Mammary epithelial cell (primary cell): ENCODE measurements at regions of chr15 and their contacts with region 1.

Region 1: GRCh38 chr15:38129531-38130204 is 123.0 kb upstream of the SPRED1 start:
- DNase-seq: peak; percentile 93
- H3K4me3 ChIP-seq: peak overlapping the region; percentile 26 to 34 (median 34)
- H3K27ac ChIP-seq: peak overlapping the region; percentile 79
- H3K4me1 ChIP-seq: peaks cover 50% of the 10 kb centered on the region
- H3K27me3 ChIP-seq: no peaks in the 10 kb centered on the region
- CTCF ChIP-seq: no peak

Region 2: DNA sequence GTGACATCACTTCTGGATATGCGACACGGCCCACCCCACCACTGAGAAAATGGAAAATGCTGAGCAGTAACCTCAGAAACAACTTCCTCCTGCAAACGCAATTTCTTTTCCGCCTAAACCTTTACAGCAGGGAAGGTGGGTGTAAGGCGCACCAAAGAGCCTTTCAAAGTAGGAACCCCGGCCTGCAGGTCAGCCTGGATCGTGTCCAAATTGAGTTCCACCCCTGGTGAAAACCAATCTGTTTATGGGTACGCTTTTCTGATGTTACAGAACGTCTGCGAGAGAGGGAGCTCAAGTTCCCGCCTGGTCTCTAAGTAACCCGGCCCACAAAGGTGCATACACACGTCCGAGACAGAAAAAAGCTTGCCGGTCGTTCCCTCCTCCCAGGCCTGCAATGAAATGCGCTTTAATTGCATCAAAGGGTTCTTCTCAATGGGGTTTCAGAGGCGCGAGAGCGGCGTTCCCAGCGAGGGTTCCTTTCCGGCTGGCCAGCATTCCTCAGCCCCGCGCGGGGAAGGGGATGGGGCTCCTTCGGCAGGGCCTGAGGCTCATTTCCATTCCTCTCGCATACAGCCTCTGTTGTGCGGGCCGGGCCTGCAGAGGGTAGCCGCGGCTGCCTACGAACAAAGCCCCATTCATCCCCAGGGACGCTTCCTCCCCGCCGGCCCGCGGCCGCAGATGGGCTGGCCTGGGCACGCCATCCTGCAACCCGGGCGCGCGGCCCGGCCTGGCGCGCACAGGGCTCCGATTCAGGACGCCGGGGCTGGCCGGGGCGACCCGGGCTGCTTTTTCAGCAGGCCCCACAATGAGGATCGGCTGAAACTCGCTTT is 57.1 kb before region 1 on chr15:
- CTCF ChIA-PET with region 1: no interaction called
- dilution Hi-C with region 1: no loop called
- in situ Hi-C with region 1: no loop called
- intact Hi-C with region 1: loop called (anchors 2 kb)
- DNase-seq: peak; percentile 88
- H3K4me3 ChIP-seq: peak overlapping the region; percentile 25 to 50 (median 49)
- H3K27ac ChIP-seq: peak overlapping the region; percentile 92
- H3K4me1 ChIP-seq: peaks cover 72% of the 10 kb centered on the region
- H3K27me3 ChIP-seq: no peaks in the 10 kb centered on the region
- CTCF ChIP-seq: peak in 1 of 2 donors; percentile 46

Region 3: GRCh38 chr15:38168467-38169070 is 38.9 kb after region 1 on chr15:
- CTCF ChIA-PET with region 1: no interaction called
- dilution Hi-C with region 1: no loop called
- in situ Hi-C with region 1: no loop called
- intact Hi-C with region 1: loop called (anchors 5 kb)
- DNase-seq: no peak
- H3K4me3 ChIP-seq: no peak overlapping the region
- H3K27ac ChIP-seq: no peak overlapping the region
- H3K4me1 ChIP-seq: no peaks in the 10 kb centered on the region
- H3K27me3 ChIP-seq: peaks cover 5% of the 10 kb centered on the region
- CTCF ChIP-seq: no peak

Region 4: GRCh38 chr15:38217191-38217595 is 87.5 kb after region 1 on chr15:
- CTCF ChIA-PET with region 1: no interaction called
- dilution Hi-C with region 1: no loop called
- in situ Hi-C with region 1: no loop called
- intact Hi-C with region 1: no loop called
- DNase-seq: peak; percentile 73
- H3K4me3 ChIP-seq: no peak overlapping the region
- H3K27ac ChIP-seq: no peak overlapping the region
- H3K4me1 ChIP-seq: peaks cover 23% of the 10 kb centered on the region
- H3K27me3 ChIP-seq: no peaks in the 10 kb centered on the region
- CTCF ChIP-seq: no peak

Region 5: DNA sequence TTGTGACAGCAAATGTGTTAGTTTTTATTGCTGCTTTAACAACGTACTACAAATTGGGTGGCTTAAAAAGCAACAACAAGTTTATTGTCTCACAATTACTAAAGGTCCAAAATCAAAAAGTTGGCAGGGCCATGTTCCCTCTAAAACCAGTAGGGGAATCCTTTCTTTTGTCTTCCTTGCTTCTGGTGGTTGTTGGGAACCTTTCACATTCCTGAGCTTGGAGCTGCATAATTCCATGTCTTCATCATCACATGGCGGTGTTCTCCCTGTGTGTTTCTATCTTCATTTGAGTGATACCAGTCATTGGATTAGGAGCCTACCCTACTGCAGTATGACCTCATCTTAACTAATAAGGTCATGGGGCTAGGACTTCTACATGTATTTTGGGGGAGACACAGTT is 130.4 kb after region 1 on chr15:
- CTCF ChIA-PET with region 1: no interaction called
- dilution Hi-C with region 1: no loop called
- in situ Hi-C with region 1: no loop called
- intact Hi-C with region 1: no loop called
- DNase-seq: no peak
- H3K4me3 ChIP-seq: no peak overlapping the region
- H3K27ac ChIP-seq: no peak overlapping the region
- H3K4me1 ChIP-seq: peaks cover 14% of the 10 kb centered on the region
- H3K27me3 ChIP-seq: no peaks in the 10 kb centered on the region
- CTCF ChIP-seq: no peak

Region 6: GRCh38 chr15:38320181-38320580 is 190.5 kb after region 1 on chr15:
- CTCF ChIA-PET with region 1: no interaction called
- dilution Hi-C with region 1: no loop called
- in situ Hi-C with region 1: no loop called
- intact Hi-C with region 1: no loop called
- DNase-seq: no peak
- H3K4me3 ChIP-seq: no peak overlapping the region
- H3K27ac ChIP-seq: no peak overlapping the region
- H3K4me1 ChIP-seq: peaks cover 5% of the 10 kb centered on the region
- H3K27me3 ChIP-seq: no peaks in the 10 kb centered on the region
- CTCF ChIP-seq: no peak

Region 7: DNA sequence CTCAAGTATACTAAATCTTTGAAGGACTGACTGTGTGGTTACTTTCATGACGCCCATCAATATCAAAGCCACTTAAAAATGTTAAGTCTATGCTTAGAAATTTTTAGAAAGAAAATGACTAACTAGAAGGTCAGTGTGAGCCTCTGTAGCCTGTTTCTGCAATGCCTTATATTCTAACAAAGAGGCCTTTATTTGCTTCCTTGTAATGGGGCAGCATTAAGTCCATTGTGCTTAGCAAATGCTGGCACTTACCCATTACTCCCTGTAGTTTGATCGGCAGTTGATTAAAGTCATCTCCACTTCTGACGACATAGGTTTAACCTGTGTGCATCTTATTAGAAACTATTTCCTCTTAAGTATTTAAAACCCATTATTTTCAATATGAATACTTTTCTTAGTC is 232.7 kb after region 1 on chr15:
- CTCF ChIA-PET with region 1: no interaction called
- dilution Hi-C with region 1: no loop called
- in situ Hi-C with region 1: no loop called
- intact Hi-C with region 1: no loop called
- DNase-seq: peak; percentile 9
- H3K4me3 ChIP-seq: no peak overlapping the region
- H3K27ac ChIP-seq: no peak overlapping the region
- H3K4me1 ChIP-seq: no peaks in the 10 kb centered on the region
- H3K27me3 ChIP-seq: peaks cover 13% of the 10 kb centered on the region
- CTCF ChIP-seq: no peak